A673 (cell line): ENCODE measurements at regions of chr15 and their contacts with region 1.

Region 1: DNA sequence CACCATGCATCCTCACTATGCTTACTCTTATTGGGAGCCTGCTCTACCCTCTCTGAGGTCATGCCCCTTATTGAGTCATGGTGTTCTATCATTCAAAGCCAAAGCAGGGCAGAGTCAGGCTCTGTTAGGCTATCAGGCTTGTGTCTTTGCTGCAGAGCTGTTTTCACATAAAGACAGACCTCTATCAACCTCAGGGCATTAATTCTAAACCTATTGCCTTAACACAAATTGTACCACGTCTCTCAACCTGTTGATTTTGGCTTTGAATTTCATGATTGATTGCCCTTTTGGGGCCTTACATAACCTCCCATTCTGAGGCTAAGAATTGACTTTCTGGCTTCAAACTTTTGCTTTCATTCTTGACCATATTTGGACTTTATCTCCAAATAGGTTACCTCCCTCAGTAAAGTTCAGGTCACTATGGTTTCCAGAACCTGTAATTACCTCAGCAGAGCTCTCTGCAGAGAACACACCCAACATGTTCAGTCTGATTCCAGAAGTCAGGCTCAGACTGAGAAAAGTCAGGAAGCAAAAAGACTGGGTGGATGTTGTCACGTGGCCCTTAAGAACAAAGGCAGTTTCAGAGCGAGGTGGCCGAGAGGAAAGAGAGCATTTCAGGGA is 221.4 kb upstream of the NANOGP8 start:
- DNase-seq: peak; percentile 55
- H3K4me3 ChIP-seq: no peak overlapping the region
- H3K27ac ChIP-seq: no peak overlapping the region
- H3K4me1 ChIP-seq: peaks cover 30% of the 10 kb centered on the region
- H3K27me3 ChIP-seq: no peaks in the 10 kb centered on the region
- CTCF ChIP-seq: no peak

Region 2: GRCh38 chr15:35458176-35458856 is 151.8 kb after region 1 on chr15:
- CTCF ChIA-PET with region 1: no interaction called
- POLR2A ChIA-PET with region 1: interaction called, 14 read pairs
- intact Hi-C with region 1: no loop called
- DNase-seq: no peak
- H3K4me3 ChIP-seq: no peak overlapping the region
- H3K27ac ChIP-seq: no peak overlapping the region
- H3K4me1 ChIP-seq: no peaks in the 10 kb centered on the region
- H3K27me3 ChIP-seq: no peaks in the 10 kb centered on the region
- CTCF ChIP-seq: no peak